ENCODE measurements at regions of chr6 and their contacts with region 1.

Region 1: GRCh38 chr6:108113557-108114519 is 39.3 kb upstream of the OSTM1 start:
- DNase-seq: no peak
- H3K4me3 ChIP-seq: no peak overlapping the region
- H3K27ac ChIP-seq: no peak overlapping the region
- H3K4me1 ChIP-seq: peaks cover 22% of the 10 kb centered on the region
- H3K27me3 ChIP-seq: peaks cover 49% of the 10 kb centered on the region
- CTCF ChIP-seq: no peak

Region 2: GRCh38 chr6:107594736-107595135 is 519.1 kb before region 1 on chr6:
- intact Hi-C with region 1: no loop called
- DNase-seq: no peak
- H3K4me3 ChIP-seq: no peak overlapping the region
- H3K27ac ChIP-seq: no peak overlapping the region
- H3K4me1 ChIP-seq: no peaks in the 10 kb centered on the region
- H3K27me3 ChIP-seq: no peaks in the 10 kb centered on the region
- CTCF ChIP-seq: no peak

Region 3: DNA sequence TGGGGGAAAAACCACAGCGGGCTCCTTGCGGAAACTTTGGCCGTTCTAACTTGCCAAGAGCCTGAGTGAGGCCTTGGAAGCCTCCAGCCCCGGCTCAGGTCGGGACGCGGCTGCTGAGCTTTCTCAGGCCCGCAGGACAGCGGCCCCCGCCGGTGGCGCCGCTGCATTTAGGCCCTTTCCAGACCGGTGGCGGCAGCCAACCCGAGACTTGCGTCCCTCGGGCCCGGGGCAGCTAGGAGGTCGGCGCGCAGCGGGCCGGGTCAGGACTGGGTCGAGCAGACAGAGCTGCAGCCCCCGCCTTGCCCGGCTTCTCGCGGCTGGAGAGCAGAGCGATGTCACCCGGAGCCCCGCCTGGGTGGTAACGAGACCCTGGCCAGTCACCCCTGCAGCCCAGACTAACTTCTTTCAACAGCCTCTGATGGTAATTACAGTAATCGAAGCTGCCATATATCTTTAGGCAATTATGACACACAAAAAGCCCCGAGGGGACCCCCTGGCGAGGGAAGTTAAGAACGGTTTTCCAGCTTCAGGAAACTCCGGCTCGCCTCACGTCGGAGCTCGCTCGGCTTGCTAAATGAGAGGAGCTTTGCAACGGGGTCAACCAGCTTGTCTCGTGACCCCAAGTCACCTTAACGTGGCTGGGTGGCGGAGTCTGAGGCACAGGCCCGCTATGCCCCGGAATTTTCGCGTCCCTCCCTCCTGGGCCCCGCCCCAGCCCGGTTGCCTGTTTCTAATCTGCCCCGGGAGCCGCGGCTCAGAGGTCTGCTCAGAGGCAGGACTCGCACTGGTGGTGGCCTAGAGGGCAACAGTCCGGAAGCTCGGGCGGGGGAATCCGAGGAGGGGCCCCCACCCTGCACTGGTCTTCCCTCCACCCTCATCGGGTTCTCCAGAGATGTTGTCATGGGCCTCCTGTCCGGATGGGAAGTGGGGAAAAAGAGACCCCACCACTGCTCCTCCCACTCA is 54.9 kb after region 1 on chr6:
- intact Hi-C with region 1: loop called (anchors 5 kb)
- DNase-seq: no peak
- H3K4me3 ChIP-seq: peak overlapping the region; percentile 7
- H3K27ac ChIP-seq: no peak overlapping the region
- H3K4me1 ChIP-seq: peaks cover 19% of the 10 kb centered on the region
- H3K27me3 ChIP-seq: peaks cover 93% of the 10 kb centered on the region
- CTCF ChIP-seq: no peak

Region 4: GRCh38 chr6:108492131-108492766 is 378.4 kb after region 1 on chr6:
- intact Hi-C with region 1: loop called (anchors 10 kb)
- DNase-seq: no peak
- H3K4me3 ChIP-seq: no peak overlapping the region
- H3K27ac ChIP-seq: no peak overlapping the region
- H3K4me1 ChIP-seq: no peaks in the 10 kb centered on the region
- H3K27me3 ChIP-seq: no peaks in the 10 kb centered on the region
- CTCF ChIP-seq: peak; percentile 31

Region 5: DNA sequence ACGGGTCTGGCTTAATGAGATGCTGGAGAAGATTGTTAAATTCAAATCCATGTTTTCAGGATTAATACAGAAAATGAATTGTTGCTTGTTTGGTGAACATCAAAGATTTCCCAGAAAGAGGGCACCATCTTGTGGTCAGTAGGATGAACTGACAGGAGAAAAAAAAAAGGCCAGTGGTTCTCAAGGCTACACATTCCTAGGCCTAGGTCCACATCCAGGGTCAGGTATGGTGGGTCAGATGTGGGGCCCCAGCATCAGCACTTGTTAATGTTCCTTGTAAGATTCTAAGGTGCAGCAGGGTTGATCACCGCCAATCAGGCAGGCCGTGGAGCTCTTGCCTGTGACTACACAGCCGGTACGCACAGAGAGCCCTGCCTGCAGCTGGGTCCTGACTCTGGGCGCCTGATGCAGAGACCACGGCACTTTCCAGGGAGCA is 412.9 kb after region 1 on chr6:
- intact Hi-C with region 1: loop called (anchors 5 kb)
- DNase-seq: no peak
- H3K4me3 ChIP-seq: no peak overlapping the region
- H3K27ac ChIP-seq: no peak overlapping the region
- H3K4me1 ChIP-seq: no peaks in the 10 kb centered on the region
- H3K27me3 ChIP-seq: no peaks in the 10 kb centered on the region
- CTCF ChIP-seq: peak; percentile 62